Gastrocnemius medialis (tissue), 4 donors: ENCODE measurements at regions of chr10 and their contacts with region 1.

Region 1: GRCh38 chr10:70404036-70404786 is at the start of gene EIF4EBP2:
- DNase-seq: peak; percentile 98 to 99
- ATAC-seq: peak; percentile 76 to 78
- H3K4me3 ChIP-seq: peak within 1 kb of the TSS; percentile 83 to 98 (median 87)
- H3K27ac ChIP-seq: peak within 1 kb of the TSS; percentile 93 to 99 (median 96)
- H3K4me1 ChIP-seq: peaks cover 36 to 42% of the 10 kb centered on the region in 2 donors
- H3K27me3 ChIP-seq: no peaks in the 10 kb centered on the region
- CTCF ChIP-seq: no peak
- POLR2A ChIP-seq: peak; percentile 99
- total RNA-seq, gene EIF4EBP2: 58.4 to 141 (median 107) TPM

Region 2: GRCh38 chr10:70381471-70382421 is 22.5 kb before region 1 on chr10:
- in situ Hi-C with region 1: no loop called
- intact Hi-C with region 1: loop called (anchors 1 kb)
- DNase-seq: peak; percentile 82 to 91
- ATAC-seq: peak; percentile 59 to 60
- H3K4me3 ChIP-seq: peak overlapping the region; percentile 71 to 85 (median 72)
- H3K27ac ChIP-seq: peak overlapping the region; percentile 91 to 97 (median 95)
- H3K4me1 ChIP-seq: peaks cover 44 to 47% of the 10 kb centered on the region in 2 donors
- H3K27me3 ChIP-seq: no peaks in the 10 kb centered on the region
- CTCF ChIP-seq: peak in 1 of 5 experiments; percentile 37
- POLR2A ChIP-seq: peak; percentile 81 to 84